Right ventricle myocardium superior (tissue), 1 donor: ENCODE measurements at regions of chr10 and their contacts with region 1.

Region 1: DNA sequence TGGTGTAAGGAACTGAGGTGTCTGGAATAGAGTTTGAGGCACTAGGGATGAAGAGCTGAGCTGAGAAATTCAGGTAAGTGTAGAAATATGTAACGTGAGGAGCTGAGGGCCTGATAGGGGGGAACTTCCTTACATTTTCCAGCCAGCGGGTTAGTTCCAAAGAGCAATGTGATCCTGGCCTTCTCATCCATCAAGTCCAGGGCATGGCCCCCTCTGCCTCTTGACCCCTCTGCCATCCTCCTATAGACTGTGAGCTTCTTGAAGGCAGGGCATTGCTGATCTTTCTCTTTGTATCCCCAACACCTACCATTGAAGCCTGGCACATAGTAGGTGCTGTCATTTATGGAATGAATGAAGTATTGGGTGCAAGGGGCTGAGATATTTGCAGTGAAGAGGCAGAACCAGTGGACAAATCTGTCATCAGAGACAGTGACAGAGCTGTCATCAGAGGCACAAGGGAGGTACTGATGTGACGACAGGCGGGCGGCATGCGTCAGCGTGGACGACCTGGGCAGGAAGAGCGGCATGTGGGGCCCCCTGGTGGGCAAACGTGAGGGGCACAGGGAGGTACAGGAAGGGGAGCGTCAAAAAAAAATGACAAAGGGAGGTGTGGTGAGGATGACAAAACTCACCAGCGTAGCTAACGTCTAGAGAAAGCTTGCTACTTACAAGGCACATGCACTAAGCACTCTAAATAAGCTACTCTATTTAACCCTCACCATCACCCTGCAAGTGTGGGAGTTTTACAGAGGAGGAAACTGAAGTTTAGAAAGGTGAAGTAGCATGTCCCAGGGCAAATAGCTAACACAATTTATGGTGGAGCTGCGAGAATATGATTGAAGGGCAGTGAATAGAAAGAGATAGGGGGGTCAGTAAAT is 5.2 kb upstream of the CAMK2G start:
- DNase-seq: peak; percentile 92
- ATAC-seq: peak; percentile 94

Region 2: GRCh38 chr10:73848821-73849489 is 30.6 kb before region 1 on chr10:
- intact Hi-C with region 1: loop called (anchors 1 kb)
- DNase-seq: peak; percentile 91
- ATAC-seq: peak; percentile 95